CD4-positive, alpha-beta memory T cell (primary cell): ENCODE measurements at regions of chr20 and their contacts with region 1.

Region 1: DNA sequence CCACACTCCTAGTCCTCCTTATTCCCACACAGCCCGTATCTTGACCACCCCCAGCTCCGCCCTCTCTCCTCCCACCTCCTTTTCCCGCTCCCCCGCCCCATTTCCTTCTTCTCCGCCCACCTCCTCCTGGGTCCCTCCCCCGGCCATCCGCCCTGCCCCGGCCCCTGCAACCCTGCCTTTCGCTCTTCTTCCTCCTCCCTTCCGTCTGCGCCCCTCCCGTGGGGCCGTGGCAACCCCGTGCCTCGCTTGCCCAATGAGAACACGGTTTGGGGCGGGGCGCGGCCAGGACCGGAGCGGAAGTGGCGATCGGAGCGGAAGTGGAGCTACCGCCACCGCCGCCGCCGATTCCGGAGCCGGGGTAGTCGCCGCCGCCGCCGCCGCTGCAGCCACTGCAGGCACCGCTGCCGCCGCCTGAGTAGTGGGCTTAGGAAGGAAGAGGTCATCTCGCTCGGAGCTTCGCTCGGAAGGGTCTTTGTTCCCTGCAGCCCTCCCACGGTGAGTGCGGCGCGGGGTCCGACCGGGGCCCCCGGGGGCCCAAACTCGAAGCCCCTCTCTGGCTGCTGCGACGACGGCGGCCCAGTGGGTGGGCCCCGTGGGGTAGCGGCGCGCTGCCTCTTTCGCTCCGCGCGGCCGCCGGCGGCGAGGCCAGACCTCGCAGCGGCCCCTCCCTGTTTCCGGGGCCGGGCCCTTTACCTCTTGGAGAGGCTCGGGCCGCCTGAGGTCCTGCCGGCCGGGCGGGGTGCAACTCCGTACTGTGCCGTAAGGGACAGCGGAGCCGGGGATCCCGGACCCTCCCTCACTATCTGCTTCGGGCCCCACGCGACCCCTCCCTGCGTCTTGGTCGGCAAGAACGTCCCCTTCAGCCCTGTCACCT is at the start of gene YWHAB:
- DNase-seq: peak; percentile 94 to 97 (median 95)
- H3K4me3 ChIP-seq: peak within 1 kb of the TSS; percentile 82 to 87
- H3K4me3 Mint-ChIP-seq: peak within 1 kb of the TSS; percentile 92 to 98 (median 97)
- H3K27ac ChIP-seq: peak within 1 kb of the TSS; percentile 85
- H3K27ac Mint-ChIP-seq: peak within 1 kb of the TSS; percentile 95 to 98 (median 97)
- H3K4me1 ChIP-seq: peaks cover 55% of the 10 kb centered on the region
- H3K4me1 Mint-ChIP-seq: peaks cover 45 to 76% (median 56%) of the 10 kb centered on the region in 4 donors
- H3K27me3 ChIP-seq: no peaks in the 10 kb centered on the region
- H3K27me3 Mint-ChIP-seq: no peaks in the 10 kb centered on the region
- total RNA-seq, gene YWHAB: 245 to 262 TPM

Region 2: GRCh38 chr20:43456809-43457639 is 1428.6 kb before region 1 on chr20:
- CTCF ChIA-PET with region 1: no interaction called
- POLR2A ChIA-PET with region 1: no interaction called
- intact Hi-C with region 1: loop called (anchors 5 kb)
- DNase-seq: peak in 4 of 5 donors; percentile 88 to 94 (median 90)
- H3K4me3 ChIP-seq: peak overlapping the region; percentile 52 to 74
- H3K4me3 Mint-ChIP-seq: peak overlapping the region; percentile 87 to 99 (median 96)
- H3K27ac ChIP-seq: peak overlapping the region; percentile 100
- H3K27ac Mint-ChIP-seq: peak overlapping the region; percentile 93 to 100 (median 99)
- H3K4me1 ChIP-seq: peaks cover 32% of the 10 kb centered on the region
- H3K4me1 Mint-ChIP-seq: peaks cover 20 to 49% (median 29%) of the 10 kb centered on the region in 4 donors
- H3K27me3 ChIP-seq: no peaks in the 10 kb centered on the region
- H3K27me3 Mint-ChIP-seq: peaks cover 4 to 7% of the 10 kb centered on the region in 2 donors

Region 3: DNA sequence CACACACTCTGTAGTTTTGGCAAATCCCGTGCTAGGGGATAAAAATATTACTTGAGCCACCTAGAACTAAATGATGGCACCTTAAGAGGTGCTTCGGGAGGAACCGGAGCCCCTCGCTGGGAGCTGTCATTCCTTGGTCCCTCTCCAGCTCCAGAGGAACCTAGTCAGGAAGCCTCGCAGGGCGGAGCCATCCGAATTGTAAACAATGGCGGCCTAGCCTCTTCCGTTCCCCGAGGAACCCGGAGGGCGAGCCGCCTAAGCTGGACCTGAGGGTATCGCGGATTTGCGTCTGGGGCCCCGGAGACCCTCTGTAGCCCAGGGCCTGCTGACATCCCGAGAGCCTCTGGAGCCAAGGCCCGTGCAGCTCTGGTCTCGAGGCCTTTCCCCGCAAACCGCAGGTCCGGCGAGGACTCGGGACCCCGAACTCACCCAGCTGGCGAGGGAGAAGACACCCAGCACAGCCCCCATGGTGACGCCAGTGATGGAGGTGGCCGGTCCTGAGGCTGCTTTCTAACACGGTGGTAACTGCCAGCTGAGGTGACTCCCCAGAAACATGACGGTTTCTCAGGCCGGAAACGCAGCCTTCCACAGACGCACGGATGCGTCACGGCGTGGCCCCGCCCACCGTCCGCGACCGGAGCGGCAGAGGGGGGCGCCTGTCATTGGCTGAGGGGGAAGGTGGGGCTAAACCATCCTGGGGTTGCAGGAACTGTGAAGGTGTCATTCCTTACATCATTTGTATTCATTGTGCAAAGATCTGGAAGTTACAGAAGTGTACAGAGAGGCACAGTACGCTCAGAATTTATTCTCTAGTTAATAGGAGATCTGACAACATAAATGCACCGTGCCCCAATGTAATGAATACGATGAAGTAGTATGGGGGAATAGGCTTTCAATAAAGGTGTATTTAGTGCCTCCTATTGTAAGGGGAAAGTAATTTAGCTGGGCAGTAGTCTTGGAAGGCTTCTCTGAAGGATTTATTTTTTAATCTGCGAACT is 363.8 kb before region 1 on chr20 and contains the start of gene SERINC3:
- CTCF ChIA-PET with region 1: no interaction called
- POLR2A ChIA-PET with region 1: interaction called, 6 read pairs
- intact Hi-C with region 1: loop called (anchors 10 kb)
- DNase-seq: peak; percentile 97 to 98 (median 98)
- H3K4me3 ChIP-seq: peak within 1 kb of the TSS; percentile 62 to 78
- H3K4me3 Mint-ChIP-seq: peak within 1 kb of the TSS; percentile 81 to 94 (median 90)
- H3K27ac ChIP-seq: peak within 1 kb of the TSS; percentile 99
- H3K27ac Mint-ChIP-seq: peak within 1 kb of the TSS; percentile 82 to 99 (median 95)
- H3K4me1 ChIP-seq: peaks cover 54% of the 10 kb centered on the region
- H3K4me1 Mint-ChIP-seq: peaks cover 29 to 68% (median 54%) of the 10 kb centered on the region in 4 donors
- H3K27me3 ChIP-seq: no peaks in the 10 kb centered on the region
- H3K27me3 Mint-ChIP-seq: no peaks in the 10 kb centered on the region
- total RNA-seq, gene SERINC3: 84.8 to 90.1 TPM

Region 4: GRCh38 chr20:44909872-44910689 is 24.5 kb after region 1 on chr20 and contains the start of gene PABPC1L:
- CTCF ChIA-PET with region 1: interaction called, 32 read pairs
- POLR2A ChIA-PET with region 1: interaction called, 22 read pairs
- intact Hi-C with region 1: loop called (anchors 1 kb)
- DNase-seq: peak; percentile 68 to 83 (median 71)
- H3K4me3 ChIP-seq: peak within 1 kb of the TSS; percentile 42 to 61
- H3K4me3 Mint-ChIP-seq: peak within 1 kb of the TSS; percentile 82 to 92 (median 86)
- H3K27ac ChIP-seq: peak within 1 kb of the TSS; percentile 40
- H3K27ac Mint-ChIP-seq: peak within 1 kb of the TSS; percentile 29 to 86 (median 74)
- H3K4me1 ChIP-seq: peaks cover 19% of the 10 kb centered on the region
- H3K4me1 Mint-ChIP-seq: peaks cover 14 to 45% (median 30%) of the 10 kb centered on the region in 4 donors
- H3K27me3 ChIP-seq: no peaks in the 10 kb centered on the region
- H3K27me3 Mint-ChIP-seq: no peaks in the 10 kb centered on the region
- total RNA-seq, gene PABPC1L: 46.5 to 50.0 TPM

Region 5: GRCh38 chr20:44942264-44942973 is 56.8 kb after region 1 on chr20:
- CTCF ChIA-PET with region 1: no interaction called
- POLR2A ChIA-PET with region 1: no interaction called
- intact Hi-C with region 1: no loop called
- DNase-seq: no peak
- H3K4me3 ChIP-seq: no peak overlapping the region
- H3K4me3 Mint-ChIP-seq: no peak overlapping the region
- H3K27ac ChIP-seq: no peak overlapping the region
- H3K27ac Mint-ChIP-seq: peak overlapping the region in 3 of 7 donors; percentile 47 to 72 (median 70)
- H3K4me1 ChIP-seq: no peaks in the 10 kb centered on the region
- H3K4me1 Mint-ChIP-seq: peaks cover 0 to 5% (median 3%) of the 10 kb centered on the region in 4 donors
- H3K27me3 ChIP-seq: no peaks in the 10 kb centered on the region
- H3K27me3 Mint-ChIP-seq: no peaks in the 10 kb centered on the region

Region 6: GRCh38 chr20:44979090-44979621 is 93.5 kb after region 1 on chr20:
- CTCF ChIA-PET with region 1: no interaction called
- POLR2A ChIA-PET with region 1: interaction called, 11 read pairs
- intact Hi-C with region 1: no loop called
- DNase-seq: peak; percentile 86 to 94 (median 88)
- H3K4me3 ChIP-seq: peak overlapping the region; percentile 11 to 33
- H3K4me3 Mint-ChIP-seq: peak overlapping the region; percentile 67 to 91 (median 83)
- H3K27ac ChIP-seq: peak overlapping the region; percentile 84
- H3K27ac Mint-ChIP-seq: peak overlapping the region; percentile 92 to 99 (median 97)
- H3K4me1 ChIP-seq: peaks cover 98% of the 10 kb centered on the region
- H3K4me1 Mint-ChIP-seq: peaks cover 65 to 94% (median 80%) of the 10 kb centered on the region in 4 donors
- H3K27me3 ChIP-seq: no peaks in the 10 kb centered on the region
- H3K27me3 Mint-ChIP-seq: no peaks in the 10 kb centered on the region